ENCODE measurements at regions of chr11 and their contacts with region 1.

Region 1: GRCh38 chr11:132941024-132941646 is 591.2 kb downstream of the OPCML start:
- DNase-seq: no peak
- H3K4me3 ChIP-seq: no peak overlapping the region
- CTCF ChIP-seq: peak; percentile 65

Region 2: GRCh38 chr11:132610216-132610615 is 330.9 kb before region 1 on chr11:
- CTCF ChIA-PET with region 1: interaction called, 11 read pairs
- POLR2A ChIA-PET with region 1: no interaction called
- DNase-seq: no peak
- H3K4me3 ChIP-seq: no peak overlapping the region
- CTCF ChIP-seq: no peak

Region 3: GRCh38 chr11:132648851-132649250 is 292.3 kb before region 1 on chr11:
- CTCF ChIA-PET with region 1: interaction called, 12 read pairs
- POLR2A ChIA-PET with region 1: no interaction called
- DNase-seq: peak; percentile 31
- H3K4me3 ChIP-seq: no peak overlapping the region
- CTCF ChIP-seq: no peak

Region 4: DNA sequence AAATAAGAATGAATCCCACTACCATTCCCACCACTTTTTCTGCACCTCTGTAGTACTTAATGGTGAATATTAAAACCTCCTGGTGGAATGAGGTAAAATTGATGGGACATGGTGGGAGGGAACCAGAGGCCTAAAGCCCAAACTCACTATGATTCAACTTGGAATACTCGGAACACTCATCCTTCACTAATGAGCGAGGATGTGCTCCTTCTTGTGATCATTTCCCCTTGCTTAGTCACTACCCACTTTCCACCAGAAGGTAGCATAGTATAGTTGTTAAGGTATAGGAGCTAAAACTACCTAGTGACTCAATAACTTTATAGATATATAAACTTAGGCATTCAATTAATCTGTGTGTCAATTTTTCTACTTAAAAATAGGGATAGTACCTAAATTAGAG is 137.7 kb before region 1 on chr11:
- CTCF ChIA-PET with region 1: interaction called, 14 read pairs
- POLR2A ChIA-PET with region 1: no interaction called
- DNase-seq: no peak
- H3K4me3 ChIP-seq: no peak overlapping the region
- CTCF ChIP-seq: no peak

Region 5: GRCh38 chr11:132920451-132921096 is 20.6 kb before region 1 on chr11:
- CTCF ChIA-PET with region 1: interaction called, 52 read pairs
- POLR2A ChIA-PET with region 1: no interaction called
- DNase-seq: no peak
- H3K4me3 ChIP-seq: no peak overlapping the region
- CTCF ChIP-seq: no peak

Region 6: DNA sequence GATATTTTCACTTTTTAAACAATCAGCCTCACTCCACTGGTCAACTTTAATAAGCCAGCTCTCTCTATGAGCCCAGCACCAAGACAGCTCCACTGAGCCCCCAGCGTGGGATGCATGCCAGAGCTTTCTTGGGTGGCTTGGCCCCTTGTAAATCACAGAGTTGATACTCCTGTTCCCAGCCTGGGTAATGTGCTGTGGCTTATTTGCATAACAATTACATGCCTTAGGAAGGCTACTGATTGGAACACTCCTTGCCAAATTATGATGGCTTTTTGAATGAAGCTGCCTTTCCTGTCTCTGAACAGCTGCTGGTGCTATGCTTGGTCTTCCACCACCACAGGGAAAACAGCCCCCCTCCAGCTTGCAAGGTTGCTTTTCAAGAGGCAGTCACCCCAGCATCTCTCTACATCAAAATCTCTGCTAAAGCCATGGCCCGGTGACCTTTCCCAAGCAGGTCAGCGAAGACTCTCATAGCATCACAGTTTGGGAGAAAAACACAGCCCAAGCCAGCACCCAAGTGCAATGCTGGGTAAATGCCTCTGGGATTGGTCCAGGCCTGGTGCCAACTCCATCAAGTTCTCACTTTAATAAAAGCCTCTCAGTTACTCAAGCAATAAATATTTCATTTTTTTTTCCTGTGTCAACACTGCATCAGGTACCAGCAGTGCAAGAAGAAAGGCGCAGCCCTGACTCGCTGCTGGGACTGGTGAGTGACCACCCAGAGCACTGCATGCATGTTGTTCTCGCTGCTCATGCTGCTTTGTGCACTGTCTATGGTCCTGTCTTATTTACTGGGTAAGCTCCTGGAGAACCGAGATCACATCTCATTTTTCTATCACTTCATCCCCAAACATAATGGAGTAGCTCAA is 41.9 kb after region 1 on chr11:
- CTCF ChIA-PET with region 1: interaction called, 10 read pairs
- POLR2A ChIA-PET with region 1: no interaction called
- DNase-seq: no peak
- H3K4me3 ChIP-seq: no peak overlapping the region
- CTCF ChIP-seq: no peak

Region 7: GRCh38 chr11:133243832-133244231 is 302.7 kb after region 1 on chr11:
- CTCF ChIA-PET with region 1: no interaction called
- POLR2A ChIA-PET with region 1: no interaction called
- DNase-seq: no peak
- H3K4me3 ChIP-seq: no peak overlapping the region
- CTCF ChIP-seq: no peak

Measured in AG04449 (cell line).